ENCODE measurements at regions of chr12 and their contacts with region 1.

Region 1: GRCh38 chr12:92145731-92146496 is at the start of gene BTG1:
- DNase-seq: peak; percentile 100
- H3K4me3 ChIP-seq: peak within 1 kb of the TSS; percentile 90 to 99 (median 96)
- H3K27ac ChIP-seq: peak within 1 kb of the TSS; percentile 98 to 99 (median 99)
- H3K4me1 ChIP-seq: peaks cover 0 to 13% (median 4%) of the 10 kb centered on the region in 4 donors
- H3K27me3 ChIP-seq: no peaks in the 10 kb centered on the region
- CTCF ChIP-seq: no peak
- EP300 ChIP-seq: peak in 1 of 4 donors; percentile 33
- POLR2A ChIP-seq: peak; percentile 97 to 99
- total RNA-seq, gene BTG1: 41.0 to 62.9 (median 49.5) TPM

Region 2: DNA sequence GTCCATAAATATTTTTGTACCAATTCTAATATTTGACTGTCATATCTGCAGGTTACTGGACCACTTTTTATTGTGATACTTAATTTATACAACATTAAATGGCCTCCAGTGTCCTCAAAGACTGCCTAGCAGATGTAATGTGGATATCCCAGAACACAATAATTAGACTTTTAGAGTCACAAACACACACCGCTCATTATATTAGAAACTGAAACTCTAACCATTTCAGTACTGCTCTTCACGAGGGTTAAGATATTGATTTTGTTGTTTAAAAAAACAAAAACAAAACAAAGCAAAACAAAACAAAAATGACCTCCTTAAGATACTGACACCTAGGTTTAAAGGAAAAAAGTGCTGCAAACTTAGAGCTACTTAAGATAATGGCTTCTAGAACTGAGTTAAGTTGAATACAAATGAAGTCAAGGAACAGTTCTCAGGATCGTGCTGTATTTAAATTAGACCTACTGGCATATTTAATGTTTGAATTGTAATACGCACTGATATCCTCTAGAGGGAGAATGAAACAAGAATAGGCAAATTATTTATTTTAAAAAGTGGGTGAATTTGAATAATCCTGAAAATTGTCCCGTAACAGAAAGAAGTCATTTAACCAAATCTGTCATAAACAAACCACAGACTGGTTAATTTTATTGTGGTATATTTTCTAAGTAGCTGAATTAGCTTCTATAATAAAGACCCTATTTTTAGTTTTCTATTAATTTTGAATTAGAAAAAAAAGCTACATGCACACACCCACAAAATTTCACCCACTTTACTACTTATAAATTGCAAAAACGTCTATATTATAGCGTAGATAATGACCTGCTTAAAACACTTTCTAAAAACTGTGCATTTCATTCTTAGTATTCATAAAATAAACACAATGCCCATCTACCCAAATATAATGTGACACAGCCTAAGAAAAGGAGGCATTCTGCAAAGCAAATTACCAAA is 568.1 kb before region 1 on chr12:
- intact Hi-C with region 1: loop called (anchors 5 kb)
- DNase-seq: no peak
- H3K4me3 ChIP-seq: peak overlapping the region in 1 of 4 donors; percentile 8
- H3K27ac ChIP-seq: peak overlapping the region in 1 of 4 donors; percentile 19
- H3K4me1 ChIP-seq: peaks cover 0 to 12% (median 12%) of the 10 kb centered on the region in 4 donors
- H3K27me3 ChIP-seq: no peaks in the 10 kb centered on the region
- CTCF ChIP-seq: peak in 2 of 4 experiments; percentile 42 to 58
- EP300 ChIP-seq: no peak
- POLR2A ChIP-seq: no peak

Region 3: DNA sequence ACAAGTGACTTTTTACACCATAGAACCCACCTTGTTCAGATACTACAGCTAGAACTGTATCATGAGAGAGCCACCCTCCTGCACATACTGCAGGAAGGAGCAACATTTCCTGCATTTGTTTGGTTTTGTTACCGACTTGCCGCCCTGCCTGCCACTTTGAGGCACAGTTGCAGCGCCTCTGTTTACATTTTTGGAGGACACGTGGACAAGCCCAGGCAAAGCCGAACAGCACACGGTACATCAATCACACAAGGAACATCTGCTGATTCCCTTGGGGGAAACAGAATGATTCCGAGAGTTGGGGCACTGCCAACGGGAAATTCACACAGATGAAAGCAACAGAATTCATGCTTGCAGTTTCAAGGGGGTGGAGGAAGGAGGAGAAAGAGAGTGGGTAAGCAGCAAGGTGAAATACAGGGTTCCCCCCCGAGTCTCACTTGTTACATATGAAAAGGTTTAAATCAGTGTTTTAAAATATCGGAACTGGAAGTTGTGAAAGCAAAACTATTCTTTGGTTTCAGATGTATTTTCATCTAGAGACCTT is 111.0 kb before region 1 on chr12:
- intact Hi-C with region 1: loop called (anchors 2 kb)
- DNase-seq: peak; percentile 79
- H3K4me3 ChIP-seq: peak overlapping the region; percentile 5 to 41 (median 29)
- H3K27ac ChIP-seq: peak overlapping the region; percentile 54 to 82 (median 80)
- H3K4me1 ChIP-seq: peaks cover 0 to 64% (median 42%) of the 10 kb centered on the region in 4 donors
- H3K27me3 ChIP-seq: no peaks in the 10 kb centered on the region
- CTCF ChIP-seq: no peak
- EP300 ChIP-seq: peak in 1 of 4 donors; percentile 61
- POLR2A ChIP-seq: no peak

Region 4: GRCh38 chr12:92096346-92097136 is 49.4 kb before region 1 on chr12:
- intact Hi-C with region 1: no loop called
- DNase-seq: no peak
- H3K4me3 ChIP-seq: no peak overlapping the region
- H3K27ac ChIP-seq: no peak overlapping the region
- H3K4me1 ChIP-seq: no peaks in the 10 kb centered on the region
- H3K27me3 ChIP-seq: no peaks in the 10 kb centered on the region
- CTCF ChIP-seq: no peak
- EP300 ChIP-seq: no peak
- POLR2A ChIP-seq: no peak

Region 5: GRCh38 chr12:92244036-92244435 is 98.1 kb after region 1 on chr12:
- intact Hi-C with region 1: loop called (anchors 5 kb)
- DNase-seq: peak; percentile 73
- H3K4me3 ChIP-seq: no peak overlapping the region
- H3K27ac ChIP-seq: peak overlapping the region; percentile 48 to 79 (median 66)
- H3K4me1 ChIP-seq: peaks cover 0 to 25% (median 24%) of the 10 kb centered on the region in 4 donors
- H3K27me3 ChIP-seq: no peaks in the 10 kb centered on the region
- CTCF ChIP-seq: peak in 2 of 4 experiments; percentile 12 to 31
- EP300 ChIP-seq: peak; percentile 72 to 94 (median 84)
- POLR2A ChIP-seq: no peak

Region 6: DNA sequence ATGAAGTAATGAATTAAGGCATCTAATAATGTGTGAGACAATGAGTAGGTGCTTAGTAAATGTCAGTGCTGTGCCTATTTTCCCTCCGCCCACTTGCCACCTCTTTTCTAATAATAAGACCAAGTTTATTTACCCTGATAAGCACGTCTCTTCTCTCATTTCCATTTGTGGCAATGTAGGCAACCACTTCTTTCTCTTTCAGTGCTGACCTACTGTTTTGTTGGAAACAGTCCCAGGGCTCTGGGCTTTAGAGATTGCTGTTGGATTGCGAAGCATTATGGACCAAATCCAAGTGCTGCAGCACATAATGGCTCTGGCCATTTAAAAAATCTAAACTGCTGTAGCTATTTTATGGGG is 415.6 kb after region 1 on chr12:
- intact Hi-C with region 1: loop called (anchors 2 kb)
- DNase-seq: peak; percentile 88
- H3K4me3 ChIP-seq: no peak overlapping the region
- H3K27ac ChIP-seq: peak overlapping the region; percentile 25 to 82 (median 68)
- H3K4me1 ChIP-seq: peaks cover 2 to 41% (median 24%) of the 10 kb centered on the region in 4 donors
- H3K27me3 ChIP-seq: no peaks in the 10 kb centered on the region
- CTCF ChIP-seq: no peak
- EP300 ChIP-seq: peak in 1 of 4 donors; percentile 58
- POLR2A ChIP-seq: no peak

Measured in sigmoid colon (tissue), 7 donors.